ENCODE measurements at regions of chr3 and their contacts with region 1.

Region 1: GRCh38 chr3:97821810-97822775 is at the start of gene CRYBG3:
- DNase-seq: peak; percentile 83 to 90
- ATAC-seq: peak; percentile 96 to 99 (median 98)
- H3K4me3 ChIP-seq: peak within 1 kb of the TSS; percentile 69 to 94 (median 84)
- H3K27ac ChIP-seq: peak within 1 kb of the TSS; percentile 72 to 95 (median 92)
- H3K4me1 ChIP-seq: peaks cover 3 to 41% (median 34%) of the 10 kb centered on the region in 9 donors
- H3K27me3 ChIP-seq: peaks cover 0 to 7% (median 0%) of the 10 kb centered on the region in 7 donors
- CTCF ChIP-seq: peak in 8 of 9 donors; percentile 12 to 63 (median 24)
- total RNA-seq, gene CRYBG3: 15.9 to 39.2 (median 28.7) TPM

Region 2: DNA sequence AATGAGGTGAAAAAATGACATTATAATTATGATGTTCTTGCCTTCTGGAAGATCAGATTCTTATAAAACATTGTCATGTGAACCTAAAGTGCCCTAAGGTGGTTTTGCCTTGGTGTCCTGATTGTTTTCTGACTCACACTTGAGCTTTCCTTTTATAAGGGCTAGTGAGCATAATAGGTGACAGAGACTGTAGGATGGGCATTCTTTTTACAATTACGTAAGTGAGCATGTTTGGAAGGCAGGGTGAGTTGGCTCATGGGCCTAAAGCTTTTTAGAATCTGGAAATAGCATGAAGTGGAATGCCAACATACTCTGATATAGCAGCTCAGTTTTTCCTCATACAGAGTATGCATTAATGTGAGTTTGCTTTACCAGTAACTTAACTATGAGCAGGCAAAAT is 40.9 kb after region 1 on chr3:
- intact Hi-C with region 1: loop called in 3 of 10 experiments (anchors 2 to 5 kb)
- DNase-seq: peak in 1 of 2 donors; percentile 12
- ATAC-seq: peak in 7 of 8 donors; percentile 64 to 98 (median 84)
- H3K4me3 ChIP-seq: no peak overlapping the region
- H3K27ac ChIP-seq: peak overlapping the region in 6 of 10 donors; percentile 18 to 67 (median 52)
- H3K4me1 ChIP-seq: peaks cover 0 to 47% (median 18%) of the 10 kb centered on the region in 9 donors
- H3K27me3 ChIP-seq: no peaks in the 10 kb centered on the region
- CTCF ChIP-seq: no peak

Region 3: GRCh38 chr3:97882975-97883598 is 61.0 kb after region 1 on chr3:
- intact Hi-C with region 1: loop called in 4 of 10 experiments (anchors 5 to 10 kb)
- DNase-seq: peak in 1 of 2 donors; percentile 16
- ATAC-seq: peak in 4 of 8 donors; percentile 13 to 53 (median 28)
- H3K4me3 ChIP-seq: no peak overlapping the region
- H3K27ac ChIP-seq: peak overlapping the region in 8 of 10 donors; percentile 32 to 77 (median 54)
- H3K4me1 ChIP-seq: peaks cover 0 to 51% (median 35%) of the 10 kb centered on the region in 9 donors
- H3K27me3 ChIP-seq: no peaks in the 10 kb centered on the region
- CTCF ChIP-seq: no peak

Region 4: GRCh38 chr3:97901313-97902248 is 79.5 kb after region 1 on chr3:
- intact Hi-C with region 1: loop called in 2 of 10 experiments (anchors 5 kb)
- DNase-seq: peak in 1 of 2 donors; percentile 22
- ATAC-seq: peak in 7 of 8 donors; percentile 41 to 78 (median 69)
- H3K4me3 ChIP-seq: peak overlapping the region in 4 of 10 donors; percentile 4 to 18 (median 8)
- H3K27ac ChIP-seq: peak overlapping the region; percentile 30 to 86 (median 78)
- H3K4me1 ChIP-seq: peaks cover 0 to 41% (median 23%) of the 10 kb centered on the region in 9 donors
- H3K27me3 ChIP-seq: no peaks in the 10 kb centered on the region
- CTCF ChIP-seq: no peak

Region 5: GRCh38 chr3:97979610-97980009 is 157.5 kb after region 1 on chr3:
- intact Hi-C with region 1: loop called in 4 of 10 experiments (anchors 2 to 10 kb)
- DNase-seq: peak; percentile 25 to 50
- ATAC-seq: peak; percentile 60 to 97 (median 87)
- H3K4me3 ChIP-seq: no peak overlapping the region
- H3K27ac ChIP-seq: no peak overlapping the region
- H3K4me1 ChIP-seq: peaks cover 0 to 20% (median 5%) of the 10 kb centered on the region in 9 donors
- H3K27me3 ChIP-seq: no peaks in the 10 kb centered on the region
- CTCF ChIP-seq: peak in 1 of 9 donors; percentile 23

Measured in heart right ventricle (tissue), 16 donors.